ENCODE measurements at regions of chr6 and their contacts with region 1.

Region 1: GRCh38 chr6:46848684-46849360 is 55.6 kb downstream of the MEP1A start:
- DNase-seq: peak; percentile 74 to 90
- H3K4me3 ChIP-seq: no peak overlapping the region
- H3K4me3 Mint-ChIP-seq: peak overlapping the region; percentile 55
- H3K27ac Mint-ChIP-seq: peak overlapping the region; percentile 2
- H3K4me1 ChIP-seq: no peaks in the 10 kb centered on the region
- H3K4me1 Mint-ChIP-seq: peaks cover 12% of the 10 kb centered on the region
- H3K27me3 ChIP-seq: no peaks in the 10 kb centered on the region
- H3K27me3 Mint-ChIP-seq: no peaks in the 10 kb centered on the region
- CTCF ChIP-seq: peak; percentile 94 to 95

Region 2: DNA sequence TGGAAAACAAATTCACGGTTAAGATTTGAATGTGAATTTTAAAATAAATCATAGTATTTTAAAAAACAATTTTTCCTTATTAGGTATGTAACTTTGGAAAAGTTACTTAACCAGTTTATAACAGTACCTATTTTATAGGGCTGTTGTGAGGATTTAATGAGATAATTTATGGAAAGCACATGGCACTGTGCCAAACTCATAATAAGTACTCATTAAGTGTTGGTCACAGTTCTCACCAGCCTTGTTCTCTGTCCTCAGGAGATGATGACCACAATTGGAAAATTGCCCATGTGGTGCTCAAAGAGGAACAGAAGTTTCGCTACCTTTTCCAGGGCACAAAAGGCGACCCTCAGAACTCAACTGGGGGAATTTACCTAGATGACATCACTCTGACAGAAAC is 16.0 kb before region 1 on chr6:
- CTCF ChIA-PET with region 1: no interaction called
- POLR2A ChIA-PET with region 1: no interaction called
- intact Hi-C with region 1: no loop called
- DNase-seq: no peak
- H3K4me3 ChIP-seq: no peak overlapping the region
- H3K4me3 Mint-ChIP-seq: no peak overlapping the region
- H3K27ac Mint-ChIP-seq: no peak overlapping the region
- H3K4me1 ChIP-seq: no peaks in the 10 kb centered on the region
- H3K4me1 Mint-ChIP-seq: no peaks in the 10 kb centered on the region
- H3K27me3 ChIP-seq: no peaks in the 10 kb centered on the region
- H3K27me3 Mint-ChIP-seq: no peaks in the 10 kb centered on the region
- CTCF ChIP-seq: no peak

Region 3: DNA sequence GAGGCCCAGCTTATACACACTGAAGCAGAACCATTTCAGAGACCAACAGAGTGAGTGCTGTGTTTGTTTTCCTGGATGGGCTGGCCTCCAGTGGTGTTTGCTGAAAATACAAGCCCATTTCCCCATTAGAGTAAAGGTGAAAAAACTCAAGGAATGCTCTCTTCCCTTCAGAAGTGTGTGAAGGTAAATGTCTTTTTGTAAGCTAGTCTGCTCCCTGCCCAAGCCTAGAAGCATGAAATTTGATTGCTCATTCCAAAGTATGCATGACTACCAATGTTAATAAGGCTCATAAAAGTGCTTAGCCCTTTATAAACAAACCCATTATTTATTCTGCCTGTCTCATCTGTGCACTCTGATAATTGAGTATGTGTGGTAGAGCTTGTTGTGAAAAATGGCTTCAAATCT is 134.2 kb after region 1 on chr6:
- CTCF ChIA-PET with region 1: interaction called, 4 read pairs
- POLR2A ChIA-PET with region 1: no interaction called
- intact Hi-C with region 1: loop called (anchors 2 kb)
- DNase-seq: peak in 1 of 2 experiments; percentile 31
- H3K4me3 ChIP-seq: no peak overlapping the region
- H3K4me3 Mint-ChIP-seq: no peak overlapping the region
- H3K27ac Mint-ChIP-seq: peak overlapping the region; percentile 24
- H3K4me1 ChIP-seq: peaks cover 9% of the 10 kb centered on the region
- H3K4me1 Mint-ChIP-seq: peaks cover 19% of the 10 kb centered on the region
- H3K27me3 ChIP-seq: no peaks in the 10 kb centered on the region
- H3K27me3 Mint-ChIP-seq: no peaks in the 10 kb centered on the region
- CTCF ChIP-seq: no peak

Region 4: GRCh38 chr6:47097092-47097945 is 248.5 kb after region 1 on chr6:
- CTCF ChIA-PET with region 1: no interaction called
- POLR2A ChIA-PET with region 1: no interaction called
- intact Hi-C with region 1: no loop called
- DNase-seq: peak; percentile 71 to 78
- H3K4me3 ChIP-seq: no peak overlapping the region
- H3K4me3 Mint-ChIP-seq: no peak overlapping the region
- H3K27ac Mint-ChIP-seq: no peak overlapping the region
- H3K4me1 ChIP-seq: peaks cover 54% of the 10 kb centered on the region
- H3K4me1 Mint-ChIP-seq: peaks cover 25% of the 10 kb centered on the region
- H3K27me3 ChIP-seq: no peaks in the 10 kb centered on the region
- H3K27me3 Mint-ChIP-seq: no peaks in the 10 kb centered on the region
- CTCF ChIP-seq: peak; percentile 77 to 80

Region 5: DNA sequence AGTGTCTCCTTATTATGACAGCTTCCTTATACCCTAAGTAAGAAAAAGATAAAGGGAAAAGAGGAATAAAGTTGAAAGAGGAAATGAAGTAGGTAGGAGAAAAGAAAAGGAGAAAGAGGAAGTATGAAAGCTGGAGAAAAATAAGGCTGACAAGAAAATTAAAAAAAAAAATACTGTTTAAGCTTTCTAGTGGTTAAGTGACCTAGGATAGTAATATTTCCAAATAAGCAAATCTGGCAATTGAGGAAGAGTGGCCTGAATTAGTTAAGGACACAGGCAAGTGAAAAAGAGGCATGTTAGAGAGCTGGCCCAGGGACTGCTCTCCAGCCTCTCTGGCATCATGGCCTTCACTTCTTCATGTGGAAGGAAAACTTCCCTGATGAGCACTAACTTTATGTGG is 269.8 kb after region 1 on chr6:
- CTCF ChIA-PET with region 1: no interaction called
- POLR2A ChIA-PET with region 1: no interaction called
- intact Hi-C with region 1: no loop called
- DNase-seq: no peak
- H3K4me3 ChIP-seq: no peak overlapping the region
- H3K4me3 Mint-ChIP-seq: no peak overlapping the region
- H3K27ac Mint-ChIP-seq: no peak overlapping the region
- H3K4me1 ChIP-seq: peaks cover 14% of the 10 kb centered on the region
- H3K4me1 Mint-ChIP-seq: peaks cover 15% of the 10 kb centered on the region
- H3K27me3 ChIP-seq: no peaks in the 10 kb centered on the region
- H3K27me3 Mint-ChIP-seq: no peaks in the 10 kb centered on the region
- CTCF ChIP-seq: no peak

Measured in Caco-2 (cell line).